ENCODE measurements at regions of chr4 and their contacts with region 1.

Region 1: GRCh38 chr4:163554870-163555465 is 60.5 kb downstream of the TMA16 start:
- DNase-seq: no peak
- ATAC-seq: no peak
- H3K4me3 ChIP-seq: no peak overlapping the region
- H3K27ac ChIP-seq: no peak overlapping the region
- H3K4me1 ChIP-seq: 0 out of 2 replicates have a peak, but pooled peaks cover 3% of the 10 kb centered on the region
- H3K27me3 ChIP-seq: no peaks in the 10 kb centered on the region
- CTCF ChIP-seq: peak; percentile 55; the same call in 1 of the 2 replicates

Region 2: GRCh38 chr4:164012396-164013027 is 457.5 kb after region 1 on chr4:
- CTCF ChIA-PET with region 1: no interaction called
- POLR2A ChIA-PET with region 1: no interaction called
- in situ Hi-C with region 1: no loop called
- intact Hi-C with region 1: loop called (anchors 5 kb)
- DNase-seq: no peak
- ATAC-seq: no peak
- H3K4me3 ChIP-seq: no peak overlapping the region
- H3K27ac ChIP-seq: no peak overlapping the region
- H3K4me1 ChIP-seq: no peaks in the 10 kb centered on the region
- H3K27me3 ChIP-seq: no peaks in the 10 kb centered on the region
- CTCF ChIP-seq: peak; percentile 31

Region 3: GRCh38 chr4:164731827-164732474 is 1177.0 kb after region 1 on chr4:
- CTCF ChIA-PET with region 1: interaction called, 4 read pairs
- POLR2A ChIA-PET with region 1: no interaction called
- in situ Hi-C with region 1: no loop called
- intact Hi-C with region 1: loop called (anchors 5 kb)
- DNase-seq: peak; percentile 25
- ATAC-seq: no peak
- H3K4me3 ChIP-seq: no peak overlapping the region
- H3K27ac ChIP-seq: no peak overlapping the region
- H3K4me1 ChIP-seq: no peaks in the 10 kb centered on the region
- H3K27me3 ChIP-seq: no peaks in the 10 kb centered on the region
- CTCF ChIP-seq: peak; percentile 79

Region 4: DNA sequence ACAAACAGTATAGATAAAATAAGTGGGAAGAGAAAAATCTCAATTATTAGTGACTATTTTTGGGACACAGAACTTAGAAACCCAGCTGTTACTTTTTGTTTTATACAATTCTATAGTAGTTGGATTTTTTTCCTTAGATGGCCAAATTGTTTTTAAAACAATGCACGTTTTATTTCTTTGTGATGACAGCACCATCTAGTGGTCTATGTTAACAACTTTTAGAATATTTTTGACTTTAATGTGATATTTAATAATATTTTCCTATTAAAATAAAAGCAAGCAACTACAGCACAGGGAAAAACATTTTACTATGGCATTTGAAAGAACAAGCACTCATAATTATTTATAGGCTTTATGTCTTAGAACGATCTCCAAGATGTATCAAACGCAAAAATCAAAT is 1193.4 kb after region 1 on chr4:
- CTCF ChIA-PET with region 1: no interaction called
- POLR2A ChIA-PET with region 1: no interaction called
- in situ Hi-C with region 1: no loop called
- intact Hi-C with region 1: loop called (anchors 5 kb)
- DNase-seq: no peak
- ATAC-seq: no peak
- H3K4me3 ChIP-seq: no peak overlapping the region
- H3K27ac ChIP-seq: no peak overlapping the region
- H3K4me1 ChIP-seq: no peaks in the 10 kb centered on the region
- H3K27me3 ChIP-seq: no peaks in the 10 kb centered on the region
- CTCF ChIP-seq: peak; percentile 16; the same call in 1 of the 2 replicates

Measured in Panc1 (cell line).